PC-9 (cell line): ENCODE measurements at regions of chr12 and their contacts with region 1.

Region 1: GRCh38 chr12:123469978-123470377 is 12.0 kb downstream of the SNRNP35 start:
- DNase-seq: no peak
- H3K4me3 ChIP-seq: no peak overlapping the region
- H3K27ac ChIP-seq: no peak overlapping the region
- H3K4me1 ChIP-seq: no peaks in the 10 kb centered on the region
- H3K27me3 ChIP-seq: no peaks in the 10 kb centered on the region
- CTCF ChIP-seq: no peak

Region 2: DNA sequence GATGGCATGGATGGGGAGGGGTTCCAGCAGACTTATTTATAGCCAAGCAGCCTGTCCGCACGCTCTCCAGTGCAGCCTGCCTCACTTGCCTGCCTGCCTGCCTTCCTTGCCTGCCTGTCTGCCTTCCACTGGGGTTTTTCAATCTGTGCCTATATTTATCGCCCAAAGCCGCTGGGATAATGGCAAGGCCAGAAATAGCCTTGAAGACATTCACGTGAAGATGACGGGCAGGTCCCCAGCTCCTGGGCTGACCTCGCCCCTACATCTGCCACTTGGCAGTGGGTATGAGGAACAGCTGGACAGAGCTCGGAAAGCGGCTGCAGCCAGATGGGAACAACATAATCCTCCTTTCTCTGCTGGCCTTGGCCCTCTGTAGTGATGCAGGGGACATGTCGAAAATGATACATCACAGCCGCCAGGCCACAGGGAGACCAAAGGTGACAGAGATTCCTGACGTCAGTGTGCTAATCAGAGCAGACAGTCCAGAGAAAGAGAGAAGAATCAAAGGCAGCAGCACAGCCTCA is 372.4 kb before region 1 on chr12:
- CTCF ChIA-PET with region 1: no interaction called
- POLR2A ChIA-PET with region 1: no interaction called
- intact Hi-C with region 1: no loop called
- DNase-seq: no peak
- H3K4me3 ChIP-seq: no peak overlapping the region
- H3K27ac ChIP-seq: no peak overlapping the region
- H3K4me1 ChIP-seq: peaks cover 45% of the 10 kb centered on the region
- H3K27me3 ChIP-seq: no peaks in the 10 kb centered on the region
- CTCF ChIP-seq: no peak

Region 3: DNA sequence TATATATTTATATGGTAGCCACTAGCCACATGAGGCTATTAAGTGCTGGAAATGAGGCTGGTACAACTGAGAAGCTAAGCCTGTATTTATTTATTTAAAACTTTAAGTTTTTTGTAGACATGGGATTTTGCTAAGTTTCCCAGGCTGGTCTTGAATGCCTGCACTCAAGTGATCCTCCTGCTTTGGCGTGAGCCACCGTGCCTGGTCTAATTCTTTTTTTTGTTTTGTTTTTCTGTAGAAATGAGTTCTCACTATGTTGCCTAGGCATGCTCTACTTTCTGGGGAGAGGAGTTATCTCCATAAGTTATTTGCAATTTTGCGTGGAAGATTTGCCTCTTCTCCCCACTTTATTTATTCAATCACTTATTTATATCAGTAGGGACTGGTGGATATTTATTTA is 16.8 kb before region 1 on chr12:
- CTCF ChIA-PET with region 1: no interaction called
- POLR2A ChIA-PET with region 1: no interaction called
- intact Hi-C with region 1: no loop called
- DNase-seq: no peak
- H3K4me3 ChIP-seq: no peak overlapping the region
- H3K27ac ChIP-seq: no peak overlapping the region
- H3K4me1 ChIP-seq: peaks cover 14% of the 10 kb centered on the region
- H3K27me3 ChIP-seq: no peaks in the 10 kb centered on the region
- CTCF ChIP-seq: no peak

Region 4: GRCh38 chr12:123502163-123502704 is 32.3 kb after region 1 on chr12:
- CTCF ChIA-PET with region 1: interaction called, 14 read pairs
- POLR2A ChIA-PET with region 1: no interaction called
- intact Hi-C with region 1: no loop called
- DNase-seq: no peak
- H3K4me3 ChIP-seq: no peak overlapping the region
- H3K27ac ChIP-seq: no peak overlapping the region
- H3K4me1 ChIP-seq: no peaks in the 10 kb centered on the region
- H3K27me3 ChIP-seq: no peaks in the 10 kb centered on the region
- CTCF ChIP-seq: no peak

Region 5: GRCh38 chr12:124248941-124249825 is 779.2 kb after region 1 on chr12:
- CTCF ChIA-PET with region 1: no interaction called
- POLR2A ChIA-PET with region 1: no interaction called
- intact Hi-C with region 1: no loop called
- DNase-seq: no peak
- H3K4me3 ChIP-seq: no peak overlapping the region
- H3K27ac ChIP-seq: no peak overlapping the region
- H3K4me1 ChIP-seq: no peaks in the 10 kb centered on the region
- H3K27me3 ChIP-seq: peaks cover 99% of the 10 kb centered on the region
- CTCF ChIP-seq: no peak

Region 6: GRCh38 chr12:124359671-124360581 is 889.9 kb after region 1 on chr12:
- CTCF ChIA-PET with region 1: no interaction called
- POLR2A ChIA-PET with region 1: no interaction called
- intact Hi-C with region 1: no loop called
- DNase-seq: peak in 1 of 2 experiments; percentile 87
- H3K4me3 ChIP-seq: no peak overlapping the region
- H3K27ac ChIP-seq: no peak overlapping the region
- H3K4me1 ChIP-seq: no peaks in the 10 kb centered on the region
- H3K27me3 ChIP-seq: no peaks in the 10 kb centered on the region
- CTCF ChIP-seq: no peak